Gastrocnemius medialis (tissue), 4 donors: ENCODE measurements at regions of chr1 and their contacts with region 1.

Region 1: GRCh38 chr1:244652699-244653466 is at the start of gene DESI2:
- DNase-seq: peak; percentile 99
- ATAC-seq: peak; percentile 97 to 99
- H3K4me3 ChIP-seq: peak within 1 kb of the TSS; percentile 73 to 89 (median 87)
- H3K27ac ChIP-seq: peak within 1 kb of the TSS; percentile 92 to 98 (median 94)
- H3K4me1 ChIP-seq: peaks cover 30 to 45% of the 10 kb centered on the region in 2 donors
- H3K27me3 ChIP-seq: no peaks in the 10 kb centered on the region
- CTCF ChIP-seq: peak; percentile 54 to 69 (median 67)
- POLR2A ChIP-seq: peak; percentile 99
- total RNA-seq, gene DESI2: 22.8 to 33.0 (median 25.3) TPM

Region 2: GRCh38 chr1:243255791-243256512 is 1396.9 kb before region 1 on chr1 and contains the start of gene SDCCAG8:
- in situ Hi-C with region 1: no loop called
- intact Hi-C with region 1: loop called (anchors 10 kb)
- DNase-seq: peak; percentile 99
- ATAC-seq: peak; percentile 86
- H3K4me3 ChIP-seq: peak within 1 kb of the TSS; percentile 78 to 95 (median 79)
- H3K27ac ChIP-seq: peak within 1 kb of the TSS; percentile 87 to 97 (median 96)
- H3K4me1 ChIP-seq: peaks cover 47 to 49% of the 10 kb centered on the region in 2 donors
- H3K27me3 ChIP-seq: no peaks in the 10 kb centered on the region
- CTCF ChIP-seq: no peak
- POLR2A ChIP-seq: peak; percentile 91 to 94
- total RNA-seq, gene SDCCAG8: 12.3 to 33.9 (median 26.1) TPM

Region 3: GRCh38 chr1:244180256-244180655 is 472.6 kb before region 1 on chr1:
- in situ Hi-C with region 1: no loop called
- intact Hi-C with region 1: no loop called
- DNase-seq: no peak
- ATAC-seq: no peak
- H3K4me3 ChIP-seq: no peak overlapping the region
- H3K27ac ChIP-seq: no peak overlapping the region
- H3K4me1 ChIP-seq: no peaks in the 10 kb centered on the region
- H3K27me3 ChIP-seq: no peaks in the 10 kb centered on the region
- CTCF ChIP-seq: no peak
- POLR2A ChIP-seq: no peak

Region 4: GRCh38 chr1:244451951-244452795 is 200.7 kb before region 1 on chr1:
- in situ Hi-C with region 1: loop called in 3 of 4 experiments (anchors 5 to 25 kb)
- intact Hi-C with region 1: loop called (anchors 1 kb)
- DNase-seq: peak; percentile 99
- ATAC-seq: peak; percentile 92 to 94
- H3K4me3 ChIP-seq: peak overlapping the region; percentile 89 to 99 (median 94)
- H3K27ac ChIP-seq: peak overlapping the region; percentile 96 to 99 (median 98)
- H3K4me1 ChIP-seq: peaks cover 28% of the 10 kb centered on the region in 2 donors
- H3K27me3 ChIP-seq: no peaks in the 10 kb centered on the region
- CTCF ChIP-seq: peak in 4 of 5 experiments; percentile 29 to 53 (median 46)
- POLR2A ChIP-seq: no peak

Region 5: GRCh38 chr1:244835276-244836134 is 182.6 kb after region 1 on chr1 and contains the start of gene COX20:
- in situ Hi-C with region 1: no loop called
- intact Hi-C with region 1: loop called (anchors 2 kb)
- DNase-seq: peak; percentile 74 to 88
- ATAC-seq: peak; percentile 70 to 80
- H3K4me3 ChIP-seq: peak within 1 kb of the TSS; percentile 68 to 81 (median 76)
- H3K27ac ChIP-seq: peak within 1 kb of the TSS; percentile 96 to 99 (median 99)
- H3K4me1 ChIP-seq: peaks cover 11 to 33% of the 10 kb centered on the region in 2 donors
- H3K27me3 ChIP-seq: no peaks in the 10 kb centered on the region
- CTCF ChIP-seq: peak in 1 of 5 experiments; percentile 14
- POLR2A ChIP-seq: peak; percentile 65 to 66
- total RNA-seq, gene COX20: 22.7 to 72.0 (median 35.4) TPM

Region 6: GRCh38 chr1:244918421-244919319 is 265.8 kb after region 1 on chr1:
- in situ Hi-C with region 1: no loop called
- intact Hi-C with region 1: loop called (anchors 5 kb)
- DNase-seq: peak; percentile 64 to 86
- ATAC-seq: peak; percentile 69 to 79
- H3K4me3 ChIP-seq: peak overlapping the region; percentile 56 to 70 (median 63)
- H3K27ac ChIP-seq: peak overlapping the region; percentile 88 to 96 (median 92)
- H3K4me1 ChIP-seq: peaks cover 32 to 37% of the 10 kb centered on the region in 2 donors
- H3K27me3 ChIP-seq: no peaks in the 10 kb centered on the region
- CTCF ChIP-seq: peak in 3 of 5 experiments; percentile 12 to 51 (median 21)
- POLR2A ChIP-seq: peak; percentile 78 to 79

Region 7: DNA sequence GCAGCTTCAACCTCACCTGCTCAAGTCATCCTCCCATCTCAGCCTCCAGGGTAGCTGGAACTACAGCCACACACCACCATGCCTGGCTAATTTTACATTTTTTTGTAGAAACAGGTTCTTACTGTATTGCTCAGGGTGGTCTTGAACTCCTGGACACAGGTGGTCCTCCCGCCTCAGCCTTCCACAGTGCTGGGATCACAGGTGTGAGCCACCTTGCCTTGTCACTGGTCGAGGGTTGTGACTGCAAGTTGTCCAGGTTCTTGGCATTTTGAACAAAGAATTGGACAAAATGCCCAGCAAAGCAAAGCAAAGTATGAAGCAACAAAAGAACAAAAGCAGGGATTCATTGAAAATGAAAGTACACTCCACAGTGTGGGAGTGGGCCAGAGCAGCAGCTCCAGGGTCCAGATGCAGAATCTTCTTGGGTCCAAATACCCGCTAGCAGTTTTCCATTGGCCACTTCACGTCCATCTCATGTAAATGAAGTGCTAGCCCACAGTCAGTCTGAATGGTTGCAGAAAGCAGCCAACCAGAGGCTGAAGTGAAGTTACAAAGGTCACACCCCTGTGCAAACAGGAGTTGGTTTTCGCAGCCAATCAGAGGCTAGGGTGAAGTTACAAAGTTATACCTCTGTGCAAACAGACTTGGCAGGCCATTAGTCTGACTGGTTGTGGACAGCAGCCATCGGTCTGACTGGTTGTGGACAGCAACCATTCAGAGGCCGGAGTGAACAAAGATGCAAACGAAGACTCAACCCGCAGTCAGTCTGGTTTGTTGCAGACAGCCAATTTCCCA is 392.4 kb after region 1 on chr1:
- in situ Hi-C with region 1: no loop called
- intact Hi-C with region 1: loop called (anchors 2 kb)
- DNase-seq: peak in 1 of 2 donors; percentile 57
- ATAC-seq: peak in 1 of 2 donors; percentile 73
- H3K4me3 ChIP-seq: no peak overlapping the region
- H3K27ac ChIP-seq: no peak overlapping the region
- H3K4me1 ChIP-seq: no peaks in the 10 kb centered on the region
- H3K27me3 ChIP-seq: no peaks in the 10 kb centered on the region
- CTCF ChIP-seq: no peak
- POLR2A ChIP-seq: no peak